HAP-1 (cell line): ENCODE measurements at regions of chr17 and their contacts with region 1.

Region 1: DNA sequence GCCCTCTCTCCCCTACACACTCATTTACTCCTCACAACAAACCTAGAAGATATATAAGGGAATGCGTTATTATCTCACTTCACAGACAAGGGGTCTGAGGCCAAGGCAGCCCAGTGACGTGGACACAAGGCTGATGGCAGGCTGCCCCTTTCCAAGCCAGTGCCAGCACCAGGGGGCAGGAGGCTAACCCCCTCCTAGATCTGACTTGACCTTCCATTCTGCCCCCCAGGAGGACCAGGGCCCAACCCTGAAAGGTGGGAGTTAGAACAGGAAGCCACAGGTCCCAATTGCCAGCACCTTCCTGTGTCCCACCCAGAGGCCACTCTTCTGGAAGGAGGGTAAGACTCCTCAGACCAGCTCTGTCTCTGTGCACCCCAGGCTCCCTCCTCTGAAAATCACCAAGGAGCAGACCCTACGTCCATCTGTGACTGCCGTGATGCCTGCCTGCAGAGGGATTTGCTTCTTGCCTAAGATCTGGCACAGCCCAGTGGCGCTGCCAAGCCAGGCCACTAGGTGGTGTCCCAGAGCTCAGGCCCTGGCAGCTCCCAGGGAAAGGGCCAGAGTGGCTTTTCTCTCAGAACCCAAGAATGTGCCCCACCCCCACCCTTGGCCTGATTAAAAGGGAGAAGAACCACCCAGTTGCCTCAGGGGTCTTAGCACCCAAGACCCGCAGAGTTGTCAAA is 42.4 kb upstream of the MRPS23 start:
- DNase-seq: peak; percentile 49 to 90
- H3K4me3 ChIP-seq: no peak overlapping the region
- H3K4me1 ChIP-seq: peaks cover 12% of the 10 kb centered on the region
- H3K27me3 ChIP-seq: no peaks in the 10 kb centered on the region

Region 2: DNA sequence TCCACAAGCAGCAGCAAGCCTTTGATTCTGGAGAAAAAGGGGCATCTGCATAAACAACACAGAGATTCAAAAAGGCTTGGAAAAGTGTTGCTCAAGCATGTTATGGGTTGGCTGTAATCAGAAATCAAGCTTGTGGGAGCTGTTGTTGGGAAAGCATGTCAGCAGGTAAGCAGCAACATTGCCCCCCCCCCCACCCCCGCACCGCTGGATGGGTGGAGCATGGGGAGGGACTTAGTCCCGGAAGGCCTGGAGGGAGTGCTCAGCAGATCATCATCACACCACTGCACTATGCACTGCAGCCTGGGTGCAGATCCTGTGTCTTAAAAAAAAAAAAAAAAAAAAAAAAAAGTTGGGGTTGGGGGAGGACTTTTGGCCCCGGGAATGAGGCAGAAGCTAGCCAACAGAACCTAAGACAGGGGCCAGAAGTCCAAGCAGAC is 824.0 kb before region 1 on chr17:
- in situ Hi-C with region 1: no loop called
- DNase-seq: no peak
- H3K4me3 ChIP-seq: no peak overlapping the region
- H3K4me1 ChIP-seq: peaks cover 12% of the 10 kb centered on the region
- H3K27me3 ChIP-seq: no peaks in the 10 kb centered on the region

Region 3: DNA sequence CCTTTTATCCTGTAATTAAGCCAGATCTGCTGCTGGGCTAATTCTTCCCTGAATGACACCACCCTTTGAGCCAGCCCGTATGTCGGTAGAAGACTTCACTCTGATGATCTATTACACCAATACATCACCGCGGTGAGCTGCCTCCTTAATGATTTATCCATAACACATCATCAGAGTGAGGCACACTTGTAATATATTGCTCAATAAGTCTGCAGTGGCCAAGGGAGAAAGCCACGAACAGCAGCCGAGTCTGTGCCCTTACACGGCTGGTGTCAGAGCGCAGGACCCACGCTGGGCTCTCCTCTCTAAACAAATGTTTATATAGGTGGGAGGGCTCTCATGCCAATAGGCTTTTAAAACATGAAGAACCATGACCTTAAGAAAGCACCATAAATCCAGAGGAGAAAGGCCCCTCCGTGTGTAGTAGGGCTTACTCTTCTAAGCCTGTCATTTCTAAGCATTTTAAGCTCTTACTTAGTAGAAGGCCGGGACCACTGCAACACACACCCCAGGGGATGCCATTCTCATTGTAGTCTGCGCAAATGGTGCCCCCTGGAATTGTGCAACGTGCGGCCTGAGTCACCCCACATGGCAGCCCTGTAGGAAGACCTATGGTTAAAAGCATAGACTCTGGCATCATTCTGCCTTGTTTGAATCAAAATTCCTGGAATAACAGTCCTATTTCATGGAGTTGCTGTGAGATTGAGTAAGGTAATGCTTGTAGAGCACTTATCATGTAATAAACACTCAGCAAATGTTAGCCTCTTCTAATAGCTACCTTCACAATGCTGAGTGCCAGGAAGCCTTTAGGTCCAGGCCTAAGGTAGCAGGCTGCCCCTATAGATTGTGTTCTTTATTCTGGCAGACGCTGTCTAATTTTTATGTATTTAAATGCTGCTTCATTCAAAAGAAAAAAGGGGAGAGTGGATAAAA is 68.6 kb before region 1 on chr17:
- in situ Hi-C with region 1: no loop called
- DNase-seq: no peak
- H3K4me3 ChIP-seq: no peak overlapping the region
- H3K4me1 ChIP-seq: no peaks in the 10 kb centered on the region
- H3K27me3 ChIP-seq: peaks cover 3% of the 10 kb centered on the region; the same call in 1 of the 2 replicates

Region 4: GRCh38 chr17:57995076-57995956 is 103.0 kb after region 1 on chr17:
- in situ Hi-C with region 1: loop called (anchors 10 kb)
- DNase-seq: peak; percentile 70 to 76
- H3K4me3 ChIP-seq: no peak overlapping the region
- H3K4me1 ChIP-seq: peaks cover 15% of the 10 kb centered on the region
- H3K27me3 ChIP-seq: no peaks in the 10 kb centered on the region